AG04449 (cell line): ENCODE measurements at regions of chr1 and their contacts with region 1.

Region 1: GRCh38 chr1:170692866-170693575 is 29.1 kb downstream of the PRRX1 start:
- DNase-seq: no peak
- H3K4me3 ChIP-seq: no peak overlapping the region
- CTCF ChIP-seq: no peak

Region 2: GRCh38 chr1:170668209-170669106 is 24.6 kb before region 1 on chr1:
- CTCF ChIA-PET with region 1: interaction called, 12 read pairs
- POLR2A ChIA-PET with region 1: no interaction called
- DNase-seq: no peak
- H3K4me3 ChIP-seq: peak overlapping the region; percentile 95
- CTCF ChIP-seq: no peak

Region 3: GRCh38 chr1:170711682-170712081 is 18.7 kb after region 1 on chr1:
- CTCF ChIA-PET with region 1: interaction called, 17 read pairs
- POLR2A ChIA-PET with region 1: no interaction called
- DNase-seq: peak; percentile 88
- H3K4me3 ChIP-seq: no peak overlapping the region
- CTCF ChIP-seq: no peak